Dorsolateral prefrontal cortex (tissue), 120 donors: ENCODE measurements at regions of chr15 and their contacts with region 1.

Region 1: DNA sequence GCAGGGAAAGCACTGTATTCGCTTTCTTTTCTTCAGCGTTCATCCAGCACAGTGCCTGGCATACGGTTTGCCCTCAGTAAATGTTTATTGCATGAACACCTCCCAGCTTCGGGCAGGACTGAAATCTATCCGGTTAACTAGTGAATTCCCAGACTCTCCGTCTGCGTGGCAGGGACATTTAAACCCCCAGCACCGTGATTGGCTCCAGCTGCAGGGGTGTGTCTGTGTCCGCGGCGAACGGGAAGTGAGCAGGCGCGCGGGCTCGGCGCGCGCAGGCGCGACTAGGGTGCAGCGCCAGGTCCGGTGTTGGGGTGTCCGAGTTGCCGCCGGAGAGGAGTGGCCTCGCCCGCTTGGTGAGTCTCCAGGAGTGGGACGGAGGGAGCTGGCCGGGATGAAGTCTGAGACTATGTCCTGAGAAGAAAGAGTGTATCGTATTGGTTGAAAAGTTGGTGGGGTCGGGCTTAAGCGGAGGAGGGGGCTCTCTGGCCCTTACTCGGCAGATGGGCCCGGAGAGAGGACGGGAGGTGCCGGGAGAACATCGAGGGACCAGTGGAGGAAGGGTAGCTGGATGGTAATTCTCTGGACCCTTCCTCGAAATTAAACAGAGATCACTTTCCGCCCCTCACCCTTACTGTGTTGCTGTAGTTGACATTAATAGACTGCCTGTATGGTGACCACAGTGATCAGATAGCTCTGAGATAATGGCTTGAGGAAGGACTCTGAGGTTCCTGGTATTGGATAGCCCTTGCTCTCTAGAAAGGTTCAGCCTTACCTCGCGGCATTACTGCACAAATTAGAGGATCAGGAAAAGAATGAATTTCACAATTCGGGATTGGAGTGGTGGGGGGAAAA is at the start of gene SNAP23:
- DNase-seq: peak; percentile 84 to 96 (median 92)
- H3K4me3 ChIP-seq: peak within 1 kb of the TSS; percentile 50 to 98 (median 83)
- H3K27ac ChIP-seq: peak within 1 kb of the TSS; percentile 81 to 100 (median 97)
- H3K27me3 ChIP-seq: no peaks in the 10 kb centered on the region
- CTCF ChIP-seq: peak in 19 of 56 donors; percentile 6 to 45 (median 19)
- total RNA-seq, gene SNAP23: 20.3 to 91.7 (median 37.6) TPM

Region 2: GRCh38 chr15:42171122-42171521 is 324.5 kb before region 1 on chr15:
- intact Hi-C with region 1: no loop called
- DNase-seq: no peak
- H3K4me3 ChIP-seq: no peak overlapping the region
- H3K27ac ChIP-seq: peak overlapping the region in 2 of 59 donors; percentile 9 to 17
- H3K27me3 ChIP-seq: no peaks in the 10 kb centered on the region
- CTCF ChIP-seq: no peak

Region 3: GRCh38 chr15:42184296-42184695 is 311.3 kb before region 1 on chr15:
- intact Hi-C with region 1: no loop called
- DNase-seq: no peak
- H3K4me3 ChIP-seq: no peak overlapping the region
- H3K27ac ChIP-seq: peak overlapping the region in 2 of 59 donors; percentile 12 to 16
- H3K27me3 ChIP-seq: no peaks in the 10 kb centered on the region
- CTCF ChIP-seq: no peak

Region 4: DNA sequence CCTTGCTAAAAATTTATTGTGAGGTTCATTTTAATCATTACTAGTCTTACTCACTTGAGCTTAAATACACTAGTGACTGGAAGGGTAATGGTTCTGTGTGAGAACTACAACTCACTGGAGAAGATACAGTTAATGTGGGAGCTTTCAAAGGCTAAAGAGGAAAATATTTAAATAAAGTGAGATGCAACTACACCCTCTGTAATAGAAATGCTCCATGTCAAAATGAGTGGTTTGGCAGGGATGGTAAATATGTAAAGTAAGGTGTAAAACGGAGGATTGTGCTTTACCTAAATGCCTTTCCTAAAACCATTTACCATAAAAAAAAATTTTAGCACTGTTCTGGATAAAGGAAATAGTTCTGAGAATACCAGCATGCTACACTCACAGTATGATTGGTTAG is 37.7 kb after region 1 on chr15:
- intact Hi-C with region 1: no loop called
- DNase-seq: no peak
- H3K4me3 ChIP-seq: no peak overlapping the region
- H3K27ac ChIP-seq: no peak overlapping the region
- H3K27me3 ChIP-seq: no peaks in the 10 kb centered on the region
- CTCF ChIP-seq: no peak

Region 5: DNA sequence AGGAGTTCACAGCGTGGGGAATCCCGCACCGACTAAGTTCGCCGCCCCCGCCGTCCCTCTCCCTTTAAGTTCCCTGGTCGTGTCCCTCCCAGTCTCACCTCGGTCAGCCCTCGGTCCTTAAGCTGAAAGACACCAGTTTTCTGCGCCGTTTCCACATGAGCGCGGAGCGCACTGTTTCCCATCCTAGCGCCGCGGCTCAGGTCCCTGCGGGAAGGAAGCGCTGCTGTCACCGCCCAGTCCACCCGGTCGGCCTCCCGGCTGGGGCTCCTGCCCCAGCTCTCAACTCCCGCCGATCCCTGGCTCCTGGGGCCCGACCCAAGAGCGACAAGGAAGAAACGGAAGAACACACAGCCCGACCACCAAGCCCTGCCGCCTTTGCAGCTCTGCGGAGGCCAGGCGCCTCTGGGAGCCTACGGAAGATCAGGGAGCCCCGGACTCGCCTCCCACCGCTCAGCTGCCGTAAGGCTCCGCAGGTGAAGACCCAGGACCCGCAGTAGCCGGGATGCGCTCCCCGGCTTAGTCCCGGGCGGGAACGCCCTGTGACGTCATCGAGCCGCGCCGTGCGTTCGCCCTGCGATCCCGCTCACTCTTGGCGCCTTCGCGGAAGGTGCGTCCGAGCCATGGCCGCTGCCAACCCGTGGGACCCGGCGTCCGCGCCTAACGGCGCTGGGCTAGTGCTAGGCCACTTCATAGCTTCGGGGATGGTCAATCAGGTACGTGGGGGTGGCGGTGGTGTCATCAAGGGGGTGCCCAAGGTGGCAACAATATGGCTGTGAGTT is 52.9 kb after region 1 on chr15 and contains the starts of genes HAUS2 and LRRC57:
- intact Hi-C with region 1: loop called (anchors 5 kb)
- DNase-seq: peak; percentile 71 to 91 (median 82)
- H3K4me3 ChIP-seq: peak within 1 kb of the TSS; percentile 65 to 100 (median 94)
- H3K27ac ChIP-seq: peak within 1 kb of the TSS; percentile 24 to 96 (median 86)
- H3K27me3 ChIP-seq: no peaks in the 10 kb centered on the region
- CTCF ChIP-seq: peak in 17 of 56 donors; percentile 8 to 37 (median 17)
- total RNA-seq, gene HAUS2: 10.9 to 26.1 (median 19.7) TPM
- total RNA-seq, gene LRRC57: 20.3 to 61.0 (median 36.4) TPM

Region 6: GRCh38 chr15:42575188-42576039 is 79.8 kb after region 1 on chr15 and contains the start of gene STARD9:
- intact Hi-C with region 1: loop called (anchors 5 to 10 kb)
- DNase-seq: peak; percentile 97 to 99 (median 98)
- H3K4me3 ChIP-seq: peak within 1 kb of the TSS; percentile 58 to 99 (median 91)
- H3K27ac ChIP-seq: peak within 1 kb of the TSS; percentile 6 to 95 (median 86)
- H3K27me3 ChIP-seq: no peaks in the 10 kb centered on the region
- CTCF ChIP-seq: peak in 23 of 56 donors; percentile 5 to 50 (median 28)
- total RNA-seq, gene STARD9: 14.7 to 62.1 (median 30.1) TPM

Region 7: DNA sequence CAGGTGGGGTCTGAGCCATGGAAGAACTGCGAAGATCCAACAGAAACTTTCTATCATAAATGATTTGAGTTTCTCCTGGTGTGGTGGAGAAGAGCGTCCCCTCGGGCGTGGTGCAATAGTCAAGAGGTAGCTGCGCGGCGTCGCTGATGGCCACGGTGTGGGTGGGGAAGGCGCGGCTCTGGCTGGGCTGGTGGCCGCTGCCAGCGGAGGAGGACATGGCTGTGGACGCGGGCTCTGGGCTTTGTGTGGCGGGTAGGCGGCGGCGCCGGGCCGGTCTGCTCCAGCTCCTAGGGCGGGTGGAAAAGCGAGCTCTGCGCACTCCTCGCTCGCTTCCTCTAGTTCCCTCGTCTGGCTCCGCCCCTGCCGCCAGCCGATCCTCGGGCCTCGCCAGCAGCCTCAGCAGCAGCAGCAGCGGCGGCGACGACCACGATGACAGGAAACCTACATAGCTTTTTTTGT is 85.7 kb after region 1 on chr15:
- intact Hi-C with region 1: loop called (anchors 5 to 10 kb)
- DNase-seq: peak; percentile 80 to 93 (median 90)
- H3K4me3 ChIP-seq: peak overlapping the region; percentile 24 to 72 (median 55)
- H3K27ac ChIP-seq: peak overlapping the region; percentile 51 to 97 (median 89)
- H3K27me3 ChIP-seq: no peaks in the 10 kb centered on the region
- CTCF ChIP-seq: peak in 31 of 56 donors; percentile 11 to 47 (median 24)

Region 8: GRCh38 chr15:42650208-42651066 is 154.8 kb after region 1 on chr15:
- intact Hi-C with region 1: loop called (anchors 5 to 10 kb)
- DNase-seq: peak in 9 of 10 donors; percentile 26 to 75 (median 56)
- H3K4me3 ChIP-seq: no peak overlapping the region
- H3K27ac ChIP-seq: peak overlapping the region in 2 of 59 donors; percentile 15 to 18
- H3K27me3 ChIP-seq: no peaks in the 10 kb centered on the region
- CTCF ChIP-seq: peak; percentile 33 to 89 (median 80)